ENCODE measurements at regions of chr12 and their contacts with region 1.

Region 1: DNA sequence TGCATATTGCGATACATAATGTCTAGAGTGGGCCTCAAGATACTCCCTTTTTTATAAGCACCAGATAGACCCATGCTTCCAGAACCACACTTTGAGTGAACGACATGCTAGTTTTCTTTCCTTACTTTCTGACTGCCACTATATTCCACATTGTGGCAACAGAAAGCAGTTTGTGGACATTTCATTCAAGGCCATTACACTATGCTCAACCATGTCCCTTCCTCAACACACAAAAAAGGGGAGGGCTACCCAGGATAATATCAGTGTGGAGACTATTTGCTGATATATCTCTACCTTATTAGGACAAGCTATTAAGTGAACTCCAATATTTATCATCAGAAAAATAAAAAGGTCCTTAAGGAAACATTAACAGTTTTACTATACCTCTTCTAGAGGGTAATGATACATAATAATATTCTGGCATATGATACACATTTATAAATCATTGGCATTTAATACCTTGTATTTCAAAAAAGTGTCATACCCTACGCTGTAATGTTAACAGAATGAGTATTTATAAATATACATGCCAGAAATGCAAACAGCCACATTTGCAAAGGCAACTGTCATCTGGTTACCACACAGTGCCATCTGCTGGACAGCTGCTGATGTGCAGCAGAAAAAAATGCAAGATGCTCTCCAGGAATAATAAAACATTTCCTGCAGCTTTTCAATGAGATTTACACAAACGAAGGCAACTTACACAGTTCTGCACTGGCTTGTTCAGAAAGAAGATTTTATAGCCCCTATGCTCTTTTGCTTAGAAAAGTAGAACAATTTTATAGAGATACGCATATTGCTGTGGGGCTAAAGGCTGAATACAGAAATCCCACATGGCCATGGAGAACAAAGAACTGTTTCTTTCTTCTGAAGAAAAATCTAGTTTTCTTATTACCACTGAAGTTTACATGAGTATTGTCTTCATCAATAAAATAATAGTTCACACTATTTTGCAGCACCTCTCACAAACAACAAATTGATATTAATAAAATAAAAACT is 182.2 kb upstream of the GRIP1 start:
- DNase-seq: peak; percentile 1
- ATAC-seq: peak; percentile 64
- H3K4me3 ChIP-seq: no peak overlapping the region
- H3K27ac ChIP-seq: no peak overlapping the region
- H3K4me1 ChIP-seq: no peaks in the 10 kb centered on the region
- H3K27me3 ChIP-seq: no peaks in the 10 kb centered on the region
- CTCF ChIP-seq: peak; percentile 83 to 93 (median 83)
- EP300 ChIP-seq: no peak
- POLR2A ChIP-seq: no peak
- RAD21 ChIP-seq: peak; percentile 92

Region 2: GRCh38 chr12:66269757-66270383 is 591.2 kb before region 1 on chr12:
- CTCF ChIA-PET with region 1: no interaction called
- POLR2A ChIA-PET with region 1: no interaction called
- RAD21 ChIA-PET with region 1: no interaction called
- SMC1A ChIA-PET with region 1: no interaction called
- in situ Hi-C with region 1: no loop called
- intact Hi-C with region 1: loop called (anchors 10 kb)
- DNase-seq: peak; percentile 5
- ATAC-seq: peak; percentile 80
- H3K4me3 ChIP-seq: no peak overlapping the region
- H3K27ac ChIP-seq: no peak overlapping the region
- H3K4me1 ChIP-seq: peaks cover 12% of the 10 kb centered on the region
- H3K27me3 ChIP-seq: no peaks in the 10 kb centered on the region
- CTCF ChIP-seq: peak; percentile 46 to 59 (median 53); a peak in 5 of 6 replicates
- EP300 ChIP-seq: no peak
- POLR2A ChIP-seq: no peak
- RAD21 ChIP-seq: peak; percentile 73

Region 3: DNA sequence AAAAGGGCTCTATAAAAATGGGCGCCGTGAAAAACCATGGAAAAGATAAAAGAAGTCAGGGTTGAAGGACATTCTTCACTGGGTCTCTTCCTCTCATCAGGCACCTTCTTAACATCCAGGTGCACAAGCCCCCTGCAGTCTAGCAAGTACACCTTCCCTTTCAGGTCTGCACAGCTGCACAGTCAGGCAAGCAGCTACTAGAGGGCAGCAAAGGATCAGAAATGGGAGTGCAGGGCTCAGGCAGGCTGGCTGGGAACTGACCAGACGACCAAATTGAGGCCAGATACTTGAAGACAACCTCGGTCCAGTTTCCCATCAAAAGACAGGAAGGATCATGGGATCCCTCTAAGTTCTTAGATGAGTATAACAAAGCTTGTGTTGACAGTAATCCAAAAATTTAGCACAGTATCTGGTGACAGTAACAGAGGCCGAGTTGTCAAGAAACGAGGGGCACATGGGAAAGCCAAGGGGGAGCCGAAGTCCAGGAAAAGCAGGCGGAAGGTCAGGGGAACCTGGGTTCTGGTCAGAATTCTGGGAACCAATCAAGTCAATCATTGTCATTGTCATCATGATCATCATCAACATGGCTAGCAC is 172.1 kb before region 1 on chr12:
- CTCF ChIA-PET with region 1: interaction called, 6 read pairs
- POLR2A ChIA-PET with region 1: no interaction called
- RAD21 ChIA-PET with region 1: no interaction called
- SMC1A ChIA-PET with region 1: interaction called, 3 read pairs
- in situ Hi-C with region 1: loop called (anchors 5 kb)
- intact Hi-C with region 1: loop called (anchors 2 kb)
- DNase-seq: no peak
- ATAC-seq: peak; percentile 90
- H3K4me3 ChIP-seq: no peak overlapping the region
- H3K27ac ChIP-seq: no peak overlapping the region
- H3K4me1 ChIP-seq: peaks cover 5% of the 10 kb centered on the region; the same call in 1 of the 2 replicates
- H3K27me3 ChIP-seq: no peaks in the 10 kb centered on the region
- CTCF ChIP-seq: peak; percentile 62 to 78 (median 75)
- EP300 ChIP-seq: no peak
- POLR2A ChIP-seq: no peak
- RAD21 ChIP-seq: peak; percentile 98

Region 4: DNA sequence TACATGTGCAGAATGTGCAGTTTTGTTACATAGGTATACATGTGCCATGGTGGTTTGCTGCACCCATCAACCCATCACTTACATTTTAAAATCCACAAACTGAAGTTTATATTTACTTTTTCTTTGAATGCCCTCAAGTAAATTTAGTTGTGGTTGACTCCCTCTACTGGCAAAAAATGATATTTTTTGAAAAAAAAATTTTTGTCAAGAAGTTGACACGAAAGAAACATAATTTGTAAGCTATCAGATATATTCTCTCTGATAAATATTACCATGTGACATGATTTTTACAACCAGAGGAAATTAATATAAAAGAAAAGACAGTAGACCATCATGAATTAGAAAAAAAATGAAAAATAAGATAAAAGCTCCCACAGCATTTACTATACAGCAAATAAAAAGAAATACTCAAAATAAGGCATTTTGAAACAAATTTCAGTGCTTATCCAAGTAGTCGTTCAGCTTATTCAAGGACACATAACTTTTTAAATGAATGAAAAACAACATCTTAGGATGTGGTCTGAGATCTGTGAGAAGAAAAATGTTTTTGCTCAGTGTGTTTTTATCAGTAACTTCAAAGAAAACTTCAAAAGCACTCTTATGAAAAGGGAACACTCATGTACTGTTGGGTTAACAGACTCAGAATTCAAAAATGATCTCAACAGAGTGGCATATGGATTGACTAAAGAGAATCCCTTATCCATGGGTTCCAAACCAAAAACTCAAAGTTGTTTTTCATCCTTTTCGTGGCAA is 152.2 kb before region 1 on chr12:
- CTCF ChIA-PET with region 1: interaction called, 3 read pairs
- POLR2A ChIA-PET with region 1: no interaction called
- RAD21 ChIA-PET with region 1: no interaction called
- SMC1A ChIA-PET with region 1: no interaction called
- in situ Hi-C with region 1: no loop called
- intact Hi-C with region 1: loop called (anchors 1 kb)
- DNase-seq: no peak
- ATAC-seq: no peak
- H3K4me3 ChIP-seq: no peak overlapping the region
- H3K27ac ChIP-seq: no peak overlapping the region
- H3K4me1 ChIP-seq: no peaks in the 10 kb centered on the region
- H3K27me3 ChIP-seq: no peaks in the 10 kb centered on the region
- CTCF ChIP-seq: peak in 2 of 3 experiments; percentile 21 to 24; a peak in 2 of 6 replicates
- EP300 ChIP-seq: no peak
- POLR2A ChIP-seq: no peak
- RAD21 ChIP-seq: peak; percentile 28; the same call in 1 of the 2 replicates

Region 5: DNA sequence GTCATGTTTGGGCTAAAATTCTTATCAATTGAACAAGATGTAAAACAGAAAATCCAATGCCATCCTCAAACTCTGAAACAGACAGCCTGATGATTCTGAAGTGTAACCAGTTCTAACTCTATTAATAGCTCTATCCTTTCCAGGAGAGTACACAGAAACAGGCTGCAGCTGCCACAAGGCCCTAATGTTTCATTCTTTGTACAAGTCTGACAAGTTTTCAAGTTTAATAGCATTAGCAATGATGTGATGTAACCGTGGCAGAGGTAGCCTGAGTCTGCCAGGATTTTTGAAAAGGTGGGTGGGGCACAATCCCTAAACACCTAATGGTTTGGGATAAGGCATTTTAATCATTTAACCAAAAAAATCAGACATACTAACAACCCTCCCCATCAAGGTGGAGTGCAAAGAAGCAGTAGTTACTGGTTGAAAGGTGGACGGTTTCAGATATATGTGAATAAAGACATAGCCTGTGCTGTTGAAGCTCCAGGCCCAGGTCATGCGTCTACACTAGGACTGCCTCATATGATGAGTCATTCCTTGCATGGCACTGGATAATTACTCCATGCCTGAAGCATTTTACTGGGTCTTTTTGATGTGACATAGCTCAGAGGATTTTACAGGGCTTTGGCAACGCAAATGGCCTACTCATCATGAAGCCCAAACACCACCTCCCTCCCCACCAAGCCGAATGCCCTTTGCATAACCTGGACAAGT is 37.0 kb before region 1 on chr12:
- CTCF ChIA-PET with region 1: no interaction called
- POLR2A ChIA-PET with region 1: no interaction called
- RAD21 ChIA-PET with region 1: no interaction called
- SMC1A ChIA-PET with region 1: no interaction called
- in situ Hi-C with region 1: no loop called
- intact Hi-C with region 1: no loop called
- DNase-seq: no peak
- ATAC-seq: no peak
- H3K4me3 ChIP-seq: no peak overlapping the region
- H3K27ac ChIP-seq: no peak overlapping the region
- H3K4me1 ChIP-seq: no peaks in the 10 kb centered on the region
- H3K27me3 ChIP-seq: no peaks in the 10 kb centered on the region
- CTCF ChIP-seq: no peak
- EP300 ChIP-seq: no peak
- POLR2A ChIP-seq: no peak
- RAD21 ChIP-seq: no peak

Region 6: GRCh38 chr12:66901138-66901932 is 40.3 kb after region 1 on chr12:
- CTCF ChIA-PET with region 1: no interaction called
- POLR2A ChIA-PET with region 1: no interaction called
- RAD21 ChIA-PET with region 1: no interaction called
- SMC1A ChIA-PET with region 1: no interaction called
- in situ Hi-C with region 1: no loop called
- intact Hi-C with region 1: no loop called
- DNase-seq: peak; percentile 33
- ATAC-seq: peak; percentile 94
- H3K4me3 ChIP-seq: no peak overlapping the region
- H3K27ac ChIP-seq: no peak overlapping the region
- H3K4me1 ChIP-seq: peaks cover 14% of the 10 kb centered on the region
- H3K27me3 ChIP-seq: no peaks in the 10 kb centered on the region
- CTCF ChIP-seq: no peak
- EP300 ChIP-seq: no peak
- POLR2A ChIP-seq: no peak
- RAD21 ChIP-seq: no peak